PC-3 (cell line): ENCODE measurements at regions of chr10 and their contacts with region 1.

Region 1: DNA sequence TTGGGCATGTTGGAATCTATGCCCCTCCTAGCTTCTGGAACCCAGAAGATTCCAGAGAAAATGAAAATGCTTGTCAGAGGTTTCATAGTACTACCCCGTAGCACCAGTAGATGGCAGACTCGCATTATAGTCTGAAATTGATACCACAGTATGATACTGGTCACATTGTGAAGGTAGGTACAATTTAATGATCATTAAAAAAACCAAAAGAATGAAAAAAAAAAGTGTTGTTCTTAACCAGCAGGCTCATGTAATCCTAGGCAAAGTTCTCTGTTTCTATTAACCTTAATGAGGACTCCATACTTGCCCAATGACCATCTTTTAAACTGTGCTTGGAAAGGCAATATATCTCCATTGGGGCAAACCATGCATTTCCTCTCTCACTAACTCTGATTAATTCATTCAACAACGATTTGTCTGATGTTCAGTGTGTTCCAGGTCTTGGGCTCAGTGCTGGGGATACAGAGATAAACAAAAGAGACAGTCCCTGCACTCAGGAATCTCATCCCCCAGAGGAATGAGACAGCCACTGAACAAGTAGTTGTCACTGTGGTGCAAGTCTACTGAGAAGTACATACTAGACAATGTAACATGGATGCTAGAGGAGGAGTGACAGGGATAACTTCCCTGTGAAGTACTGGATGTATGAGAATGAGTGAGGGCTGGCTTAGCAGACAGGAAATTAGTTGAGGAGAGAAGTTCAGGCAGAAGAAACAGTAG is 223.5 kb upstream of the PHYHIPL start:
- DNase-seq: peak; percentile 78
- ATAC-seq: peak; percentile 56
- H3K4me3 ChIP-seq: no peak overlapping the region
- H3K27ac ChIP-seq: no peak overlapping the region
- H3K4me1 ChIP-seq: peaks cover 25% of the 10 kb centered on the region
- H3K27me3 ChIP-seq: no peaks in the 10 kb centered on the region
- CTCF ChIP-seq: peak; percentile 91

Region 2: DNA sequence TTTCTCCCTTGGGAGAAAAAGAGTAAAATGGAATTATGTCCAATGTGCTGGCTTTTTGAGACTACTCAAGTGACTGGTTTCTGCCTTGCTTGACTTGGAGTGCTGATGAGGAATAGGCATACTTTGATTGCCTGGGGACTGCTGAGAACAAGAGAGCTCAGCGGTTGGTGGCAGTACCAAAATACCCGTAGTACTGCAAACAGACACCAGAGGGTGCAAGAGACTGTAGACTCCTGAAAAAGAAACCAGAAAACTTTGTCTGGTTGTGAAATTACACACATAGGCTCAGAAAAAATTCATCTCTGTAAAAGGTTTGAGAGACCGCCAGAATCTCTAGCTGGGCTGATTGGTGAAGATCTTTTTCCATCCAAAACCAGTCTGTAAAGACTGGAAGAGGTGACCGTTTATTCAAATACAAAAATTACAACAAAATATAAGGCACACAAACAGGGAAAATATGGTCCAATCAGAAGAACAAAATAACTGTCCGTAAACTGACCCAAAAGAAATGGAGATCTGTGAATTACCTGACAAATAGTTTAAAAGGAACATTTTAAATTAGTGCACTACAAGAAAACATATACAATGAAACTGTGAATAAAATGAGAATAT is 421.7 kb before region 1 on chr10:
- CTCF ChIA-PET with region 1: no interaction called
- POLR2A ChIA-PET with region 1: no interaction called
- intact Hi-C with region 1: loop called (anchors 1 kb)
- DNase-seq: peak; percentile 97
- ATAC-seq: peak; percentile 97
- H3K4me3 ChIP-seq: no peak overlapping the region
- H3K27ac ChIP-seq: no peak overlapping the region
- H3K4me1 ChIP-seq: no peaks in the 10 kb centered on the region
- H3K27me3 ChIP-seq: peaks cover 4% of the 10 kb centered on the region; the same call in 1 of the 2 replicates
- CTCF ChIP-seq: peak; percentile 93

Region 3: GRCh38 chr10:58791137-58791536 is 161.8 kb before region 1 on chr10:
- CTCF ChIA-PET with region 1: no interaction called
- POLR2A ChIA-PET with region 1: no interaction called
- intact Hi-C with region 1: no loop called
- DNase-seq: peak; percentile 96
- ATAC-seq: peak; percentile 82
- H3K4me3 ChIP-seq: no peak overlapping the region
- H3K27ac ChIP-seq: peak overlapping the region; percentile 19; the same call in 1 of the 2 replicates
- H3K4me1 ChIP-seq: peaks cover 11% of the 10 kb centered on the region
- H3K27me3 ChIP-seq: no peaks in the 10 kb centered on the region
- CTCF ChIP-seq: no peak

Region 4: DNA sequence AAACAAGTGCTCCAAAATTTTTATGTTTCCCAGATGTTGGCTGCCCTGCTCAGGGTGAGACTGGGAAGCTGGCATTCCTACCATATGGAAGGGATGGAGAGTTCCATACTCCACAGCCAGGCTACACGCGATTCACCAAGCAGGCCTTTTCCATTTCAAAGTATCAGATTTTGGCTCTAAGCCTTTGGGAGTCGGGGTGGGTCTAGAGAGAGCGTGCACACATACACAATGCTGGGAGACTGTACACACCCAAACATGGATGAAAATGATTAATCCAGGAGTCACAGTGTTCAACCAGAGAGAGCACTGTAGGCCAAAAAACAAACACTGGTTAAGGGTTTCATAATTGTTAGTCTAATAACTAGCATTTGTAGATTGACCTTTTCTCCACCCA is 145.3 kb before region 1 on chr10:
- CTCF ChIA-PET with region 1: no interaction called
- POLR2A ChIA-PET with region 1: no interaction called
- intact Hi-C with region 1: loop called (anchors 1 kb)
- DNase-seq: peak; percentile 98
- ATAC-seq: peak; percentile 90
- H3K4me3 ChIP-seq: peak overlapping the region; percentile 36
- H3K27ac ChIP-seq: peak overlapping the region; percentile 93
- H3K4me1 ChIP-seq: peaks cover 57% of the 10 kb centered on the region
- H3K27me3 ChIP-seq: no peaks in the 10 kb centered on the region
- CTCF ChIP-seq: no peak

Region 5: DNA sequence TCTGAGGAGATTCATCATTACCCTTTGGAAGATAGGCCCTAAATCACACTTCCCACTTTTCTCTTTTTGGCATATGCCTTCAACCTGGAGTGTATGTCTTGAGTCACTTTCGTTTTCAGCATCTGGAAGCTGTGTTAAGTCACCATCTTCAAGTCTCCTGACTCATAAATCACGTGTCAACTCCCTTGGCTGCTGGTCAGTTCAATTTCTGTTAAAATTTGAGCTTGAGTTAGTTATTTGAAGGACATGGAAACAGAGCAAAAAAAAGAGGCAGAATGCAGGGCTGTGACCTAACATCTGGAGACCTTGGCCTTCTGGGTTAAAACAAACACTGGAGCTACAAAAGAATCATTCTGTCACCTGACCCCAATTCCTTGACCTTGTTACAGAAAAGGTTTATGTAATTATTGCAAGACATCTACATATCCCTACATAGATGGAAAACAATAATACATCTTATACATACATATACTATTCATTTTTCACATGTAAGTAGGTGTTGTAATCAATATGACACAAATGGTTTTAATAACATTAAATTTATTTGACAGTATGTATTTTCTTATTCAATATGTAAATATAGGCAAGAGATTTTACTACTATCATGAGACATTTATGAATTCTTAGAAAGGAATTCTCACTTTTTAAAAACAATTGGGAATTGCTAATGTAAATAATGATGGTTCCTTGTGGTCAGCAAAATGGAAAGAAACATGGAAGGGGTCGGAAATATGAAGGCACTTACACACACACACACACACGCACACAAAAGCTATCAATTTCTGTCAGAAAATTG is 53.8 kb after region 1 on chr10:
- CTCF ChIA-PET with region 1: no interaction called
- POLR2A ChIA-PET with region 1: no interaction called
- intact Hi-C with region 1: no loop called
- DNase-seq: peak; percentile 37
- ATAC-seq: peak; percentile 43; the same call in 1 of the 2 replicates
- H3K4me3 ChIP-seq: no peak overlapping the region
- H3K27ac ChIP-seq: no peak overlapping the region
- H3K4me1 ChIP-seq: no peaks in the 10 kb centered on the region
- H3K27me3 ChIP-seq: peaks cover 23% of the 10 kb centered on the region; the same call in 1 of the 2 replicates
- CTCF ChIP-seq: no peak

Region 6: DNA sequence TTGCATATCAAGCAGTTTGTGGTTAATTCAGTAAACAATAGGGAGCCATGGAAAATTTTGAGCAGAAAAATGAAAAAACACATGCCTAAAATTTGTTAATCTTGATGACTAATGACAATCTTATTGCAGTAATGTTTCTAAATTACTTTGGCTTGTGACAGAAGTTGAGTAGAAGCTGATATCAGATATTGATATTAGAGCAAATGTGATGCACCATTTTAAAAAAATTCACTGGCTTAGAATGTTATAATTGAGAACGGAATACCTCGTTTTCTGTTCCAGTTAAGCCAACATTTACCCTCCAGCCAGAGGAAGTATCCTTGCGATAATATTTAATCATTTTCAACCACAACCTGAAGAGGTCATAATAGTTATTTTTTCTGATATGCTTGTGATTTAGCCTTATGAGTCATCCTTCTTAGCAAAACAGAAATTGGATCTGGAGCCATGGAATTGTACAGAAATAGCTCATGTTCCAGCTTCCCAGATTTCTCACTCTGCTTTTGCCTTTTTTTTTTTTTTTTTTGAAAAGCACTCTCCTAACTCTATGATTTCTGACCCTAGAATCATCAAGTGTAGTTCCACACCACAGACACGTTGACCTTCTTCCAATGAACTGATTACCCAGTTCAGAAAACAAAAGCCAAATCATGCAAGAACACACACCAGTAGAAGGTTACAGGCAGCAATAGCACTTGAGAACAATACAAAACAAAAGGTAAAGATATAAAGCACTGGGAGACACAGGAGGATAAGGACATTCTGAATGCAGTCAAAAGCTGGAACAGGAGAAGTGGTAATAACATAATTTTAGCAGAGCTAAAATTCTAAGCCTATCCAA is 126.7 kb after region 1 on chr10:
- CTCF ChIA-PET with region 1: interaction called, 10 read pairs
- POLR2A ChIA-PET with region 1: no interaction called
- intact Hi-C with region 1: no loop called
- DNase-seq: peak; percentile 52
- ATAC-seq: peak; percentile 69
- H3K4me3 ChIP-seq: no peak overlapping the region
- H3K27ac ChIP-seq: no peak overlapping the region
- H3K4me1 ChIP-seq: peaks cover 12% of the 10 kb centered on the region
- H3K27me3 ChIP-seq: peaks cover 21% of the 10 kb centered on the region
- CTCF ChIP-seq: no peak

Region 7: GRCh38 chr10:59181668-59182067 is 228.8 kb after region 1 on chr10:
- CTCF ChIA-PET with region 1: interaction called, 3 read pairs
- POLR2A ChIA-PET with region 1: no interaction called
- intact Hi-C with region 1: loop called (anchors 1 kb)
- DNase-seq: peak; percentile 80
- ATAC-seq: peak; percentile 96
- H3K4me3 ChIP-seq: no peak overlapping the region
- H3K27ac ChIP-seq: no peak overlapping the region
- H3K4me1 ChIP-seq: no peaks in the 10 kb centered on the region
- H3K27me3 ChIP-seq: peaks cover 6% of the 10 kb centered on the region
- CTCF ChIP-seq: peak; percentile 89

Region 8: DNA sequence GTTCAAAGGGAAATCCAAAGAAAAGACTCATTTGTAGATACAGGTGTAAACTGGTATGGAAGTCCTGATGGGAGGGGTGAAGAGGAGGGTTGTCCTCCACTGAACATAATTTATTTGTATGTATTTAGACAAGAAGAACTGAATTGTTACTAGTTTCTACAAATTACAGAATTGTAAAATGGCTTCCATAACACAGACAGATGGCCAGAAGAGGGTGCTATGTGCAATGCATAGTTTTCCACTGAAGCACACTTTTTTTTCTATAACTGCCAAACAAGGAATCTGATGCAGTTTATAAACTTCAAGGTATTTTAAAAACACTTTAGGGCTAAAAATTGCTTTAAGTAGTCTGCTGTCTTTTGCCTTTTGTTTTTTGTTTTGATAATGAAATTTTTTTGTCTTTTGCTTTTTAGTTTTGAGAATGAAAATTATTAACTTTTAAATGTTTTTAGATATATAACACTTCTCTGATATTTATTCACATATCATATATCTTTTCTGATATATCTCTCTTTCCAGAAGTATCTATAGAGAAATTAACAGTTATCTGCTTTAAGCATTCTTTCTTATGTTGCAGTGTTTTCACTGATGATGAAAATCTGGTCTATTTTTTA is 282.0 kb after region 1 on chr10:
- CTCF ChIA-PET with region 1: no interaction called
- POLR2A ChIA-PET with region 1: no interaction called
- intact Hi-C with region 1: loop called (anchors 2 kb)
- DNase-seq: peak; percentile 78
- ATAC-seq: peak; percentile 64
- H3K4me3 ChIP-seq: no peak overlapping the region
- H3K27ac ChIP-seq: no peak overlapping the region
- H3K4me1 ChIP-seq: peaks cover 11% of the 10 kb centered on the region
- H3K27me3 ChIP-seq: peaks cover 21% of the 10 kb centered on the region
- CTCF ChIP-seq: peak; percentile 97

Region 9: GRCh38 chr10:59465088-59465487 is 512.2 kb after region 1 on chr10:
- CTCF ChIA-PET with region 1: no interaction called
- POLR2A ChIA-PET with region 1: no interaction called
- intact Hi-C with region 1: loop called (anchors 10 kb)
- DNase-seq: peak; percentile 66
- ATAC-seq: peak; percentile 33; the same call in 1 of the 2 replicates
- H3K4me3 ChIP-seq: no peak overlapping the region
- H3K27ac ChIP-seq: no peak overlapping the region
- H3K4me1 ChIP-seq: no peaks in the 10 kb centered on the region
- H3K27me3 ChIP-seq: peaks cover 28% of the 10 kb centered on the region; the same call in 1 of the 2 replicates
- CTCF ChIP-seq: peak; percentile 76